Natural killer cell (primary cell): ENCODE measurements at regions of chr17 and their contacts with region 1.

Region 1: GRCh38 chr17:7589204-7589868 is 558 bp downstream of the SOX15 start:
- DNase-seq: peak; percentile 67 to 86
- ATAC-seq: peak; percentile 83 to 96 (median 87)
- H3K4me3 ChIP-seq: no peak overlapping the region
- H3K4me3 Mint-ChIP-seq: no peak overlapping the region
- H3K27ac ChIP-seq: no peak overlapping the region
- H3K27ac Mint-ChIP-seq: no peak overlapping the region
- H3K4me1 ChIP-seq: peaks cover 16% of the 10 kb centered on the region
- H3K4me1 Mint-ChIP-seq: peaks cover 1 to 8% of the 10 kb centered on the region in 2 donors
- H3K27me3 ChIP-seq: no peaks in the 10 kb centered on the region
- H3K27me3 Mint-ChIP-seq: no peaks in the 10 kb centered on the region
- CTCF ChIP-seq: peak; percentile 68

Region 2: DNA sequence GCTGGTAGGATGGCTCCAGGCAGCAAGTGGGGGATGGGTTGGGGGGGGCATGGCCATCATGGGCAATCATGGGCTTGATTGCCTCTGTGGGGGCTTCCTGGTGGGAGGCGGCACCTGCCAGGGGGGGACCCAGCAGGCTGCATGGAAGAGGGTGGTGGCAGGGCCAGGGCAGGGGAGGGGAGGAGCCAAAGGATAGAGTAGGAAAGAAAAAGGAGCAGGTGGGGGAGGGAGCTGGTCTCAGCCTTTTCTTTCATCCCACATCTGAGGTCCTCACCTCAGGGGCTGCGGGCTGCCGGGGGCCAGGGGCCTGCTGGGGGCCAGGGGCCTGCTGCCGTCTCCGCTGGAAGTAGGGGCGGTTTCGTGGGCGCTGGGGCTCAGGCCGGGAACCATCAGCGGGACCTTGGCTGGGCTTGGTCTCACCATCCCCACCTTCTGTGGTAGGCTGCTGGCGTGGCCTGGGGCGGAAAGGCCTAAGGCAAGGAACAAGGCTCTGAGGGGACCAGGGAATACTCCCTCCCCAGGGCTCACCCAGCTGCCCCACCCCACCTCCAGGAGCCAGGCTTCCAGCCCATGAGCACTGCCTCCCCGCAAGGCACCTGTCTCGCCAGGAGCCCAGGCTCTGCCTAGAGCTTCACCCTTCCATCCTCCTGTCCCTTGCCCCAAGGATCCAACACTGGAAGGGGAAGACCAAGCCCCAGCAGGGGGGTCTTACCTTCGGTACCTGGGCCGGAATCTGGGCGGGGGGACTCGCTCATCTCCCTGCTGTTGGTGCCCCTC is 299.9 kb before region 1 on chr17:
- intact Hi-C with region 1: no loop called
- DNase-seq: no peak
- ATAC-seq: no peak
- H3K4me3 ChIP-seq: no peak overlapping the region
- H3K4me3 Mint-ChIP-seq: no peak overlapping the region
- H3K27ac ChIP-seq: no peak overlapping the region
- H3K27ac Mint-ChIP-seq: no peak overlapping the region
- H3K4me1 ChIP-seq: peaks cover 6% of the 10 kb centered on the region
- H3K4me1 Mint-ChIP-seq: peaks cover 0 to 5% of the 10 kb centered on the region in 2 donors
- H3K27me3 ChIP-seq: peaks cover 16% of the 10 kb centered on the region
- H3K27me3 Mint-ChIP-seq: peaks cover 28 to 30% of the 10 kb centered on the region in 2 donors
- CTCF ChIP-seq: no peak

Region 3: DNA sequence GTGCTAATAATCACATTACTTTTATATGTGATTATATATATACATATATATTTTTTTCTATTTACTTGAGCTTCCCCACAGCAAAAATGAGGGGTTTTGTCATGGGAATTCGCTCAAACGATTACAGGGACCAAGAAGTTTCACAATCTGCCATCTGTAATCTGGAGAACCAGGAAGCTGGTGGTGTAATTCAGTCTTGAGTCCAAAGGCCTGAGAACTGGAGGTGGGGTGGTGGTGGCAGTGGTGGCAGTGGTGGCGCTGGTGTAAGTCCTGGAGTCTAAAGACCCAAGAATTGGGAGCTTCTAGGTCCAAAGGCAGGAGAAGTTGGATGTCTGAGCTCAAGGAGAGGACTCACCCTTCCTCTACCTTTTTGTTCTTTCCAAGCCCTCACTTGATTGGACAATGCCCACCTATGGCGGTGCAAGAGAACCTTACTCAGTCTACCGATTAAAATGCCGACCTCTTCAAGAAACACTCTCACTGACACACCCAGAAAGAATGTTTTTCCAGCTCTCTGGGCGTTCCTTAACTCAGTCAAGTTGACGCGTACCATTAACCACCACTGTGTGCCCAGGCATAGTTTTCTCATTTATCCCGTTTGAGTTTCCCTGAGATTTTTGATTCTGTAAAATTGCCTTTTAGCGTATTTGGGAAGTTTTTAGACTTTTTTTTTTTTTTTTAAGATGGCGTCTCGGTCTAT is 73.3 kb before region 1 on chr17:
- intact Hi-C with region 1: loop called (anchors 2 kb)
- DNase-seq: no peak
- ATAC-seq: no peak
- H3K4me3 ChIP-seq: no peak overlapping the region
- H3K4me3 Mint-ChIP-seq: no peak overlapping the region
- H3K27ac ChIP-seq: no peak overlapping the region
- H3K27ac Mint-ChIP-seq: no peak overlapping the region
- H3K4me1 ChIP-seq: no peaks in the 10 kb centered on the region
- H3K4me1 Mint-ChIP-seq: peaks cover 0 to 11% of the 10 kb centered on the region in 2 donors
- H3K27me3 ChIP-seq: no peaks in the 10 kb centered on the region
- H3K27me3 Mint-ChIP-seq: no peaks in the 10 kb centered on the region
- CTCF ChIP-seq: no peak

Region 4: DNA sequence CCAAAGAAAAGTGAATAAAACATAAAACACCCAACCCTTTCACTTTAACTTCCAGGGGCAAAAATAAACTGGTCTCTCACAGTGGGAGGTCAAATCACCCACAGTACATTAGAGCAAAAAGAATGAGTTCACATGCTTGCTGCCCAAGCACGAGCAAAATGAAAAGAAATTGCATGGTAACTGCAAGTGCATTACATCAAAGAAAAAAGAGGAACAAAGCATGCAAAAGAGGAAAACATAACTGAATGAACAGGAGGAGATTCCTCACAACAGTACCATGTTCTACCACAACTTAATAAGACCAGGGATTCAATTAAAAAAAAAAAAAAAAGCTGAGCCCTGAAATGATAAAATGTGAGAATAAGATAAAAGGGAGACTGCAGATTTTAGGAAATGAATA is 140.5 kb after region 1 on chr17:
- intact Hi-C with region 1: no loop called
- DNase-seq: no peak
- ATAC-seq: no peak
- H3K4me3 ChIP-seq: no peak overlapping the region
- H3K4me3 Mint-ChIP-seq: no peak overlapping the region
- H3K27ac ChIP-seq: no peak overlapping the region
- H3K27ac Mint-ChIP-seq: no peak overlapping the region
- H3K4me1 ChIP-seq: no peaks in the 10 kb centered on the region
- H3K4me1 Mint-ChIP-seq: no peaks in the 10 kb centered on the region
- H3K27me3 ChIP-seq: no peaks in the 10 kb centered on the region
- H3K27me3 Mint-ChIP-seq: peaks cover 15 to 18% of the 10 kb centered on the region in 2 donors
- CTCF ChIP-seq: no peak